Breast epithelium (tissue), 4 donors: ENCODE measurements at regions of chr3 and their contacts with region 1.

Region 1: GRCh38 chr3:83426304-83426703 is 1532.5 kb upstream of the CADM2 start:
- DNase-seq: no peak
- H3K4me3 ChIP-seq: no peak overlapping the region
- H3K27ac ChIP-seq: no peak overlapping the region
- H3K4me1 ChIP-seq: no peaks in the 10 kb centered on the region
- H3K27me3 ChIP-seq: no peaks in the 10 kb centered on the region
- CTCF ChIP-seq: no peak
- POLR2A ChIP-seq: no peak

Region 2: DNA sequence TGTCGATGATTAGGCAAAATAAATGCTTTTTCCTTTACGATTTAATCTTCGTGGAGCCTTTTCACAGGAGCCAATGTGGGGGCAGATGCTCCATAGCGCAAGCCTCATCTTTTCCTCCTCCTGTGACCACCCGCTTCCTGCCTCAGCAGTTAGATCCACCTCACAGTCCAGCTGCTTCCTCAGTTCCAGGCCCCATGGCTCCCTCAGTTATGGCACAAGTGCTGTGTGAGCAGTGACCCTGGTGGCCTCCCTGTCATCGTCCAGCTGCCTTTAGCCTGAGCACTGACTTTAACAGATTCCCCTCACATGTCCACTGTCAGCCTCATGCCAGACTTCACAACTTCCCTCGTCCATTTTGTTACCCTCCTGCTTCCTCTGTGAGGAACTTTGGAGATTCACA is 1240.3 kb before region 1 on chr3:
- intact Hi-C with region 1: no loop called
- DNase-seq: no peak
- H3K4me3 ChIP-seq: no peak overlapping the region
- H3K27ac ChIP-seq: no peak overlapping the region
- H3K4me1 ChIP-seq: no peaks in the 10 kb centered on the region
- H3K27me3 ChIP-seq: no peaks in the 10 kb centered on the region
- CTCF ChIP-seq: no peak
- POLR2A ChIP-seq: no peak

Region 3: DNA sequence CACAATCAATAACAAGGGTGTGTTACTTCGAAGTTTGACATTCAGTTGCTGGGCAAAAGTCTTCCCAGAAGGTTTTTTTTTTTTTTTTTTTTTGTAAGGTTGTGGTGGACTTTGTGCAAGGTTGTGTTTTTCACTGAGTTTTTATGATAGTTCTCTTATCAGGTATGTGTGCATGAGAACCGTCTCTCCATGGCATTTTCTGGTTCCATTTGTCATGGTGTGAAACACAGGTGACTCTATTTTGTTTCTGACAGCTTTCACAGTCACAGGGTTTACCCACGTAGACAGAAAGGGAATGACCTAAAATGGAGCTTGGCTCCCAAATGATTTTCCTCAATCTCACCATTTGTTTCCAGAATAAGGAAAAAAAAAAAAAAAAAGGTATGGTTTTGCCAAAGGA is 155.2 kb after region 1 on chr3:
- intact Hi-C with region 1: no loop called
- DNase-seq: no peak
- H3K4me3 ChIP-seq: no peak overlapping the region
- H3K27ac ChIP-seq: no peak overlapping the region
- H3K4me1 ChIP-seq: no peaks in the 10 kb centered on the region
- H3K27me3 ChIP-seq: no peaks in the 10 kb centered on the region
- CTCF ChIP-seq: no peak
- POLR2A ChIP-seq: no peak

Region 4: GRCh38 chr3:85406499-85406898 is 1980.2 kb after region 1 on chr3:
- intact Hi-C with region 1: loop called (anchors 10 kb)
- DNase-seq: no peak
- H3K4me3 ChIP-seq: no peak overlapping the region
- H3K27ac ChIP-seq: no peak overlapping the region
- H3K4me1 ChIP-seq: no peaks in the 10 kb centered on the region
- H3K27me3 ChIP-seq: no peaks in the 10 kb centered on the region
- CTCF ChIP-seq: no peak
- POLR2A ChIP-seq: no peak